Mammary epithelial cell (primary cell): ENCODE measurements at regions of chr3 and their contacts with region 1.

Region 1: DNA sequence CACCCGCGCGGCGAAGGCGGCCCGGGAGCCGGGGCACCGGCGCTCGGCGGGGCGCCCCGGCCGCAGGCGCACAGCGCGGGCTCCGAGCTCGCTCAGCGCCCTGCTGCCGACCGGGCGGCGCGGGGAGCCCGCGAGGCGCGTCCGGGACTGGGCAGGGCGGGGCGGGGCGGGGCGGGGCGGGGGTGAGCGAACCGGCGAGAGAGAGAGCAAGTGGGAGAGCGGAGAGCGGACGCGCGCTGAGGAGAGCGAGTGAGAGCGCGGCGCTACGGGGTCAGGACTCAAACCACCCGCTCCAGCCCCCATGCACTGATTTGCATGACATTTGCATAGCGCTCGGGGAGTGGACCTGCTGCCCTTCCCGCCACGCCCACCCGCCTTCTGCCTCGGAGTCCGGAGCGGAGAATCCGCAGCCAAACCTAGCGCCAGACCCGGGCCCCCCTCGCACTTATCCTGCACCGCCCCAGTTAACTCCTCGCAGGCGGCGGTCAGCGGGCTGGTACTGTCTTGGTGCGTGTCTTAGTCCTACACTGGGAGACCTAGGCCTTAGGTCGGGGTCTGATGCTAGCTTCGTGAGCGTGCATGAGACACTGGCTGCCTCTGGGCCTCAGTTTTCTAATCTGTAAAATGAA is at the start of gene MYLK:
- DNase-seq: peak; percentile 85
- H3K4me3 ChIP-seq: peak within 1 kb of the TSS; percentile 60 to 77 (median 63)
- H3K27ac ChIP-seq: peak within 1 kb of the TSS; percentile 16
- H3K4me1 ChIP-seq: peaks cover 11% of the 10 kb centered on the region
- H3K27me3 ChIP-seq: no peaks in the 10 kb centered on the region
- CTCF ChIP-seq: no peak
- total RNA-seq, gene MYLK: 103 to 1,758 TPM

Region 2: DNA sequence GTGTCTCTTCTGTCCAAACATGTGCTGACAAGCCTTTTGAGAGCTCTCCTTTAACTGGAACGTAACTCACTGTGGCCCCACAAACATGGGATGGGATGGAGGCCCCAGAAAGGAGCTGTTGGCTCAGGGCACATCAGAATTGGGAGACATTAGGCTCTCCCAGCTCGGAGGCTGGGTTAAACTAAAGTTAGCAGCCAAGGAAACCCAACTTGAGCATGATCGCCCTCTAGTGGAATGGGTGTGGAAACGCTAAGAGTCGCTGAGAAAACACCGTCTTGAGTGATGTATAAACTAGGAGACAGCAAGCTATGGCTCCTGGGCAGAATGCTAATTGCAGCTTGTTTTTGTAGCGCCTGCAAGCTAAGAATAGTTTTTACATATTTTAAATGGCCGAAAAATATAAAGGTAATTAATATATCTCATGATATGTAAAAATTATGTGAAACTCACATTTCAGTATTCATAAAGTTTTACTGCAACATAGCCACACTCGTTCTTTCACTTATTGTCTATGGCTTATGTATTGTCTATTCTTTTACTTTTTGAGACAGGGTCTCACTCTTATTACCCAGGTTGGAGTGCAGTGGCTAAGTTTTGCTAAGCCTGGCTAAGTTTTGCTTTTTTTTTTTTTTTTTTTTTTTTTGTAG is 160.7 kb before region 1 on chr3:
- CTCF ChIA-PET with region 1: no interaction called
- dilution Hi-C with region 1: no loop called
- in situ Hi-C with region 1: no loop called
- intact Hi-C with region 1: loop called (anchors 1 kb)
- DNase-seq: peak; percentile 66
- H3K4me3 ChIP-seq: no peak overlapping the region
- H3K27ac ChIP-seq: no peak overlapping the region
- H3K4me1 ChIP-seq: peaks cover 7% of the 10 kb centered on the region
- H3K27me3 ChIP-seq: no peaks in the 10 kb centered on the region
- CTCF ChIP-seq: peak; percentile 87 to 92

Region 3: DNA sequence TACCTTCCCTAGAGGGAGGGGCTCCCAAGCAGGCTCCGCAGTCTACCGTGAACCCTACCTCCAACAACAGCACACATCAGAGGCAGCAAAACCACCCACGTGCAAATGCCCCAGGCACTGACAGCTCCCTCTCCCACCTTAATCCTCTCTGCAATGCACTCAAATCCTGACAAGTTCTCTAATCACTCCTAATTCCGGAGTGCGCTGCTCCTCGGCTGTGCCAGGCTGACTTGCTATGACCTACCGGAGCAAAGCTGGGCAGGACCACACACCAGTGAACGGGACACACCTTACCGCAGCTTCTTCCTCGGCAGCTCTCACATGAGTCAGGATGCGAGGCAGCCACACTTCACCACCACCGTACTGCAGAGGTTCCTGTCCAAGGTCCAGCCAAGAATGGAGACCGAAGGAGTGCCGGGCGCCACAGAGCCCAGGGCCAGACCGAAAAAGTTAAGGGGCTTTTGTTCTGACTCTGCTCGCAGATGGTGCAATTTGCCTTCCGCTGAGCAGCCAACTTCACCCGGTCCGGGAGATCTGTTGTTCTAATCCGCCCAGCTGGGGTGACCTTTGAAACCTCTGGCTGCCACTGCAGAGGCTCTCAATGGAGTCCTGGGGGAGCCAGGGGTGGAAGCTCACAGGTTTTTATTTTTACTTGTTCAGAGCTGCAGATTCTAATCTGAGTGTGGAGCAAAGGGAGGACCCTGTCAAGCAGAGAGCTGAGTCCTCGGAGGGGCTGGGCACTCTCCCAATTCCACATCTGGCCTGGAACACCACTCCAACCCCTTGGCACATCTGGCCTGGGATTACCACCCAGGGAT is 84.6 kb before region 1 on chr3:
- CTCF ChIA-PET with region 1: no interaction called
- dilution Hi-C with region 1: no loop called
- in situ Hi-C with region 1: no loop called
- intact Hi-C with region 1: loop called (anchors 5 kb)
- DNase-seq: peak; percentile 94
- H3K4me3 ChIP-seq: peak overlapping the region in 2 of 3 experiments; percentile 0 to 27
- H3K27ac ChIP-seq: peak overlapping the region; percentile 43
- H3K4me1 ChIP-seq: peaks cover 21% of the 10 kb centered on the region
- H3K27me3 ChIP-seq: no peaks in the 10 kb centered on the region
- CTCF ChIP-seq: no peak

Region 4: GRCh38 chr3:123834631-123835030 is 49.7 kb before region 1 on chr3:
- CTCF ChIA-PET with region 1: no interaction called
- dilution Hi-C with region 1: no loop called
- in situ Hi-C with region 1: no loop called
- intact Hi-C with region 1: loop called (anchors 1 kb)
- DNase-seq: peak; percentile 94
- H3K4me3 ChIP-seq: no peak overlapping the region
- H3K27ac ChIP-seq: peak overlapping the region; percentile 58
- H3K4me1 ChIP-seq: peaks cover 62% of the 10 kb centered on the region
- H3K27me3 ChIP-seq: no peaks in the 10 kb centered on the region
- CTCF ChIP-seq: no peak

Region 5: DNA sequence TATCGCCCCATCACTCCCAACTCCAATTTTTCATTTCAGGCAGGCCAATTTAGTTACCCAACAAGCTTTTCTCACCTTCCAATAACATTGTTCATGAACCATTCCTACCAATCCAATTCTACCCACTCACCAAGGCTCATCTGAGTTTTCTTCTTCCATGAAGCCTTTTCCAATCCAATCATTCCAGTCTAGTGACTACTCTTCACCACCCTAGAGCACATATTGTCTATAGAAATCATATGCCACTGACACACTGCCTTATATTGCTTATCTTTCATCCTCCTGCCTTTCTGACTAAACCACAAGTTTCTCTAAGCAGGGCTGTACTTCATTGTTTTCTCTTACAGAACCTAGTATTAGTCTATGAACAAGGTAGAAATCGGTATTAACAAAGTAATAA is 65.3 kb after region 1 on chr3:
- CTCF ChIA-PET with region 1: no interaction called
- dilution Hi-C with region 1: no loop called
- in situ Hi-C with region 1: no loop called
- intact Hi-C with region 1: no loop called
- DNase-seq: peak; percentile 62
- H3K4me3 ChIP-seq: no peak overlapping the region
- H3K27ac ChIP-seq: no peak overlapping the region
- H3K4me1 ChIP-seq: peaks cover 8% of the 10 kb centered on the region
- H3K27me3 ChIP-seq: no peaks in the 10 kb centered on the region
- CTCF ChIP-seq: no peak